Tibial artery (tissue), 4 donors: ENCODE measurements at regions of chr1 and their contacts with region 1.

Region 1: DNA sequence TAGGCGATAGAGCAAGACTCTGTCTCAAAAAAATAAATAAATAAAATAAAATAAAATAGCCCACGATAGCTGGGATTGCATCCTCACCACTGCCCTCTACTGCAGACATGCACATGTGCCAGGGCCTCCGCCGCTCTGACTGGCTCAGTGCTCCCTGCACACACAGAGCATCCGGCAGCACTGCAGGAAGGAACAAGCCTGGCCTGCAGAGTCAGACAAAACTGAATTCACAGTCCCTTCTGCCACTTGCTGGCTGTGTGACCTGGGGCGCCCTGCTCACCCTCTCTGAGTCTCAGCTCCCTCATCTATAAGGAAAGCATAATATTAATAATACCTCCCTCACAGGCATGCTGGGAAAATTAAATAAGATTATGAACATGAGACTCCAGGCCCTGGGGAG is 35.4 kb downstream of the CSMD2 start:
- DNase-seq: no peak
- H3K4me3 ChIP-seq: no peak overlapping the region
- H3K27ac ChIP-seq: no peak overlapping the region
- H3K4me1 ChIP-seq: no peaks in the 10 kb centered on the region
- H3K27me3 ChIP-seq: peaks cover 0 to 11% of the 10 kb centered on the region in 2 donors
- CTCF ChIP-seq: no peak

Region 2: DNA sequence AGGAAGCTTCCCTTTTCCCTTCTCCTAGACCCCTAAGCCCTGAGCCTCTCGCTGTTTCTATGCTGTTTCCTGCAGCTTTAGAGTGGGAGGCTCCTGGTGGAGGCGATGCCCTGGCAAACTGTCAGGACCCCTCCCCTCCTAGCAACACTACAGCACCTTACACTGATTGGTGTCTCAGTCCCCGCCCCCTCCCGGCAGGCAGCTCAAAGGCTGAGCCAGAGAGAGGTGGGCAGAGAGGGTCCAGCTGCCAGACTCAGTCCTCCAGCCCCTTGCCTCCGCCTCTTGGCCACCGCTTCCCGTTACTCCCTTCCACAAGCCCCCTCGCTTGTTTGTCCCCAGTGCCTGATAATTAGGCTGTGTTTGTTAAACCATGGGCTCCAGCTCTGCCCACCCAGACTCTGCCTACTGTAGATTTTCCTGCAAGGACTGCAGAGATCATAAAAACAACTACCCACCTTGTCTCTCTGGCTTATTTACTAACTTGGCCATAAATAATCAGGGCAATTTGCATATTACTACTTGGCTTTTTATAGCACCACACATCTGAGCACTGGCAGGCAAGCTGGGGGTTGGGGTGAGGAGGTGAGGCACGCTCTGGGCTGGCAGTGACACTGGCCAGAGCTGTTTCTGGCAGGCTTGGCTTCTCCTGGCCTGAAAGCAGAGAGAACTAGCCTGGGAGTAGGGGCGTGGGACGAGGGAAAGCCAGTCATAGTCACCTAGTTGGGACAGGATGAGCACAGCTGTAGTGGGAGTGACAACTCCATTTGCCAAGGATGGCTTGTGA is 72.1 kb before region 1 on chr1:
- intact Hi-C with region 1: loop called (anchors 10 kb)
- DNase-seq: no peak
- H3K4me3 ChIP-seq: no peak overlapping the region
- H3K27ac ChIP-seq: no peak overlapping the region
- H3K4me1 ChIP-seq: no peaks in the 10 kb centered on the region
- H3K27me3 ChIP-seq: peaks cover 0 to 21% of the 10 kb centered on the region in 2 donors
- CTCF ChIP-seq: no peak

Region 3: DNA sequence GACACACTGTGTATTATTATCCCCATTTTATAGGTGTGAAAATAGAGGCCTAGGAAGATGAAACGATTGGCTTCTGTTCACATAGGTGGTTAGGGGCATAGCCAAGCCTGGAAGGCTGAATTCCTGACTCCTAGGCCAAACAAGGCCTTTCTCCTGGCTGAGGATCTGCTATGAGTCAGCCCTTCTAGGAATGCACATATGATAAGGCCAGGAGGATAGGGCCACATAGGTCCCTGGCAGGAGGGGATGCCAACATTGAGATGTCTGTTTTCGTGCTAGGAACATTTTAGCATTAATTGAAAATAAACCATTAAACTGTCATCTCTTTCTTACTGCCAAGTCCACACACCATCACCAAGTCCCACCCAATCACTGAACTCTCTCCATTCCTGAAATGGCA is 26.2 kb after region 1 on chr1:
- intact Hi-C with region 1: no loop called
- DNase-seq: no peak
- H3K4me3 ChIP-seq: no peak overlapping the region
- H3K27ac ChIP-seq: no peak overlapping the region
- H3K4me1 ChIP-seq: no peaks in the 10 kb centered on the region
- H3K27me3 ChIP-seq: no peaks in the 10 kb centered on the region
- CTCF ChIP-seq: no peak